HCT116 (cell line): ENCODE measurements at regions of chr4 and their contacts with region 1.

Region 1: DNA sequence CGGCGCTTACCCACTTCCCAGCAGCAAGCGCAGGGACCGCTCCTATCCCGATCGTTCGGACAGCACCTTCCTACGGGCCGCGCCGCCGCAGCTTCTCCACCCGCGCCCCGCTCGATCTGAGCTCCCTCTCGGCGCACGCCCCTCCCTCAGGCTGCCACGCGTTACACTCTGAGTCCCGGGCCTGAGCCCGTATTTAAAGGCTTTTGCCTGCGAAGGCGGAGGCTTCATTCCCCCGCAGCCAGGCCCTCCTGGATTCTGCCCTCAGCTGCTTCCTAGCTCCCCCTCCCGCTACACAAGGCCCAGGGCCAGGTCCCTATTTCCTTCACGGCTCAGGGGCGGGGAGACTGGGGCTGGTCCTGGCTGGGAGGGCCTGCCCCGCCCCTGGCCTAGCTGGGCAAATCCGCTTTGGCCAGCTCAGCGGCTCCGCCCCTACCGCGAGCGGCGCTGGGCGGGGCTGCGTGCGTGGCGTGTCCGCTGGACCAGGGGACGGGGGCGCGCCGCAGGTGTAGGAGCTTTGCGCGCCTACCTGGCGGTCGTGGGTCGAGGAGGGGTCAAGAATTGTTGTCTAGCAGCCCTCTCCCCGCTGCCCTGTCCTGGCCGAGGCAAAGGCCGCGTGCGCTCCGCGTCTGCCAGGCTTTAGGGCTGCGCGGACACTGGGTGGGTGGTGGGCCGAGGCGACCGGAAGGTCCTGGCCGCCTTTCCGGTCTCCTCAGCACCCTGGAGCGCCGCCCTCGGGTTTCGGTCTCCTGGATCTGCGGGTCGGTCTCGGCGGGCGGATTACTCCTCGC is at the start of gene UGDH:
- DNase-seq: peak; percentile 91
- ATAC-seq: peak; percentile 95
- H3K4me3 ChIP-seq: peak within 1 kb of the TSS; percentile 91 to 93
- H3K27ac ChIP-seq: peak within 1 kb of the TSS; percentile 91
- H3K4me1 ChIP-seq: peaks cover 7 to 27% of the 10 kb centered on the region in 2 experiments; a peak in 3 of 4 replicates
- H3K27me3 ChIP-seq: no peaks in the 10 kb centered on the region
- CTCF ChIP-seq: no peak
- POLR2A ChIP-seq: peak; percentile 48
- RAD21 ChIP-seq: peak; percentile 11; the same call in 1 of the 2 replicates
- total RNA-seq, gene UGDH: 67.9 TPM

Region 2: DNA sequence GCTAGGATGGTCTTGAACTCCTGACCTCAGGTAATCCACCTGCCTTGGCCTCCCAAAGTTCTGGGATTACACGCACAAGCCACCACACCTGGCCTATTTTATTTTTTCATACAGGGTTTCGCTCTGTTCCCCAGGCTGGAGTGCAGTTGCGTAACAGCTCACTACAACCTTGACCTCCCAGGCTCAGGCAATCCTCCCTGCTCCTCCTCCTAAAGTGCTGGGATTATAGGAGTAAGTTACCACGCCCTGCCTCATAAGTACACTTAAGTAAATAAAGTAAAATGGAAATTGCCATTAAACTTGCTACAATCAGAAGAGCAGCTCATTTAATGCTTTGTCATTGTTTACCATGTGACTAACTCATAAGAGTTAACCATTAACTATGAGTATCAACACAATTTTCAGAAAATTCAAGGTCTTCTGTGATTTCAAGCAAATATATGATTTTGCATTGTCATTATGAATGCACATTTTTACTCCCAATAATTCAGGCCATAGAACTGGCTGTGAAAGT is 12.5 kb before region 1 on chr4:
- CTCF ChIA-PET with region 1: no interaction called
- POLR2A ChIA-PET with region 1: interaction called, 10 read pairs
- RAD21 ChIA-PET with region 1: no interaction called
- intact Hi-C with region 1: no loop called
- DNase-seq: peak; percentile 27
- ATAC-seq: peak; percentile 68
- H3K4me3 ChIP-seq: peak overlapping the region in 1 of 2 experiments; percentile 25; a peak in 1 of 4 replicates
- H3K27ac ChIP-seq: peak overlapping the region; percentile 33
- H3K4me1 ChIP-seq: peaks cover 15 to 21% of the 10 kb centered on the region in 2 experiments
- H3K27me3 ChIP-seq: no peaks in the 10 kb centered on the region
- CTCF ChIP-seq: no peak
- POLR2A ChIP-seq: no peak
- RAD21 ChIP-seq: no peak

Region 3: GRCh38 chr4:39638354-39639240 is 111.1 kb after region 1 on chr4 and contains the start of gene SMIM14:
- CTCF ChIA-PET with region 1: no interaction called
- POLR2A ChIA-PET with region 1: interaction called, 12 read pairs
- RAD21 ChIA-PET with region 1: interaction called in 1 of 2 experiments, 3 read pairs
- intact Hi-C with region 1: loop called (anchors 2 kb)
- DNase-seq: peak; percentile 93
- ATAC-seq: peak; percentile 93
- H3K4me3 ChIP-seq: peak within 1 kb of the TSS; percentile 90 to 91
- H3K27ac ChIP-seq: peak within 1 kb of the TSS; percentile 72
- H3K4me1 ChIP-seq: peaks cover 16 to 28% of the 10 kb centered on the region in 2 experiments
- H3K27me3 ChIP-seq: no peaks in the 10 kb centered on the region
- CTCF ChIP-seq: no peak
- POLR2A ChIP-seq: peak; percentile 82
- RAD21 ChIP-seq: peak; percentile 6; the same call in 1 of the 2 replicates
- total RNA-seq, gene SMIM14: 21.6 TPM